ENCODE measurements at regions of chr9 and their contacts with region 1.

Region 1: GRCh38 chr9:125407974-125408900 is 146.6 kb downstream of the GAPVD1 start:
- DNase-seq: peak; percentile 71 to 90 (median 78)
- ATAC-seq: peak; percentile 70 to 92 (median 88)
- H3K4me3 ChIP-seq: peak overlapping the region; percentile 36 to 77 (median 68)
- H3K27ac ChIP-seq: peak overlapping the region in 7 of 12 donors; percentile 9 to 64 (median 42)
- H3K4me1 ChIP-seq: peaks cover 0 to 13% (median 5%) of the 10 kb centered on the region in 12 donors
- H3K27me3 ChIP-seq: peaks cover 0 to 3% (median 0%) of the 10 kb centered on the region in 9 donors
- CTCF ChIP-seq: peak; percentile 70 to 98 (median 92)
- POLR2A ChIP-seq: no peak

Region 2: GRCh38 chr9:125343518-125344275 is 64.5 kb before region 1 on chr9:
- intact Hi-C with region 1: no loop called
- DNase-seq: peak in 1 of 5 donors; percentile 43
- ATAC-seq: peak; percentile 72 to 93 (median 90)
- H3K4me3 ChIP-seq: no peak overlapping the region
- H3K27ac ChIP-seq: peak overlapping the region in 6 of 12 donors; percentile 1 to 49 (median 34)
- H3K4me1 ChIP-seq: peaks cover 0 to 15% (median 7%) of the 10 kb centered on the region in 12 donors
- H3K27me3 ChIP-seq: no peaks in the 10 kb centered on the region
- CTCF ChIP-seq: peak in 1 of 12 donors; percentile 11
- POLR2A ChIP-seq: no peak

Region 3: DNA sequence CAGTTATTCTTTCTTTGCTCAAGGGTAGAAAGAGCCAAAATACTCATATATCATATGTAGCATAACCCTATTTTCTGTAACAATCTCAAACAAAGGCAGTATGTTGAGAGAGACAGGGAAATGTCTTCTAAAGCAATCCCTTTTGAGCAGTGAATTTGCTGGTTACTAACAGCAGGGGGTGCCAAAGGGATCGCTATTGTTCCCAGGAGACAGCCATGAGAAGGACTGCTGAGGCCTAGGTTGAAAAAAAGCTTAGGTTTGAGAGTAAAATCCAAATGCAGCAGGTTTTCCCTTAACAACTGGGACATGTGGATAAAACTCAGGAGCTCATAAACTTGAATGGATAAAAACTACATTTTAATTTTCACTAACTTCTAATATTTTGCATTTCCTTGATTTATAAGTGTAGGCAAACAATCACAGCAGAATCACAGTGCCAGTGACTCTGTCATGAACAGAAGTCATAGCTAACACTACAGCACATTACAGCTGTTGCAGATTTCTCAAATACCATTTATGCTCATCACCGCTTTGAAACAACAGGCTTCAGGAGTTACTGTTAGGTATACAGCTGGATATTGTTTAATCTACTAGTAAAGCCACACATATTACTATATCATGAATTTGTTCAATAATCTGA is 150.3 kb after region 1 on chr9:
- intact Hi-C with region 1: loop called in 1 of 10 experiments (anchors 2 kb)
- DNase-seq: peak in 4 of 5 donors; percentile 57 to 60 (median 58)
- ATAC-seq: peak in 3 of 4 donors; percentile 65 to 83 (median 82)
- H3K4me3 ChIP-seq: no peak overlapping the region
- H3K27ac ChIP-seq: peak overlapping the region in 3 of 12 donors; percentile 18 to 37 (median 20)
- H3K4me1 ChIP-seq: peaks cover 0 to 26% (median 5%) of the 10 kb centered on the region in 12 donors
- H3K27me3 ChIP-seq: no peaks in the 10 kb centered on the region
- CTCF ChIP-seq: peak; percentile 67 to 86 (median 74)
- POLR2A ChIP-seq: no peak

Region 4: GRCh38 chr9:125746017-125746773 is 338.0 kb after region 1 on chr9:
- intact Hi-C with region 1: loop called in 1 of 10 experiments (anchors 5 kb)
- DNase-seq: peak; percentile 96 to 97 (median 97)
- ATAC-seq: peak; percentile 95 to 96 (median 96)
- H3K4me3 ChIP-seq: peak overlapping the region; percentile 43 to 96 (median 76)
- H3K27ac ChIP-seq: peak overlapping the region; percentile 40 to 94 (median 88)
- H3K4me1 ChIP-seq: peaks cover 0 to 38% (median 12%) of the 10 kb centered on the region in 12 donors
- H3K27me3 ChIP-seq: no peaks in the 10 kb centered on the region
- CTCF ChIP-seq: peak in 2 of 12 donors; percentile 6 to 9
- POLR2A ChIP-seq: peak in 1 of 2 donors; percentile 65

Region 5: DNA sequence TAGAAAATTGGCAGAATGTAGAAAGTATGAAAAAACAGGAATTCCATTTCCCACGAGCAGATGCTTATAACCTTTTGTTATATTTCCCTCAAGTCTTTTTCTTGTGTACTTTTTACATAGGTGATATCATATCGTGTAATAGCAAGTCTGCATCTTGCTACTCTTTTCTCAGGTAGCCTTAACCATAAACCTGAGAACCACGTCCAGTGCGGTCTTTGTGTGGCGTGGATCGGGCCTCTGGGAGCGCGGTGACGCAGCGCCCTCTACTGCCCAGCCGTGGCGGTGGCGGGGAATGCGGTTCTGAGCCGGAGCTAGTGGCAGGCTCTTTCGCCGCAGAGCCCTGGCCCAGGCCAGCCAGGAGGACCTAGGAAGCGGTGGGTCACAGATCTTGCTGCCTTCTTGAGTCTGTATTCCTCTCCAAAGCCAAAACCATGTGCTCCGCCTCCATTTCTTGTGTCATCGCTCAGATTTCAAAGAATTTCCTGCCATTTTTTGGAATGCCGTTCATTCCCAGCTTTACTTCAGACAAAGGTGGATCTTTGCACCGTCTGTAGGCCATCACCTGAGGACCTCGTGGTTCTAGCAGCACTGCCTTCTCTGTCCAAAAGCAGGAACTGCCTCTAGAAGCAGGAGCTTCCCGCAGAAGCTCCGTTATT is 990.3 kb after region 1 on chr9:
- intact Hi-C with region 1: loop called in 7 of 10 experiments (anchors 5 to 10 kb)
- DNase-seq: peak; percentile 70 to 91 (median 83)
- ATAC-seq: peak; percentile 79 to 92 (median 88)
- H3K4me3 ChIP-seq: no peak overlapping the region
- H3K27ac ChIP-seq: no peak overlapping the region
- H3K4me1 ChIP-seq: peaks cover 0 to 24% (median 4%) of the 10 kb centered on the region in 12 donors
- H3K27me3 ChIP-seq: no peaks in the 10 kb centered on the region
- CTCF ChIP-seq: peak in 11 of 12 donors; percentile 95 to 99 (median 97)
- POLR2A ChIP-seq: no peak

Region 6: GRCh38 chr9:126482361-126483044 is 1074.3 kb after region 1 on chr9:
- intact Hi-C with region 1: loop called in 1 of 10 experiments (anchors 2 kb)
- DNase-seq: peak in 2 of 5 donors; percentile 60 to 67
- ATAC-seq: peak in 3 of 4 donors; percentile 33 to 52 (median 43)
- H3K4me3 ChIP-seq: peak overlapping the region in 1 of 12 donors; percentile 12
- H3K27ac ChIP-seq: no peak overlapping the region
- H3K4me1 ChIP-seq: peaks cover 0 to 3% (median 0%) of the 10 kb centered on the region in 12 donors
- H3K27me3 ChIP-seq: no peaks in the 10 kb centered on the region
- CTCF ChIP-seq: no peak
- POLR2A ChIP-seq: no peak

Measured in heart left ventricle (tissue), 16 donors.